AG04450 (cell line): ENCODE measurements at regions of chr4 and their contacts with region 1.

Region 1: GRCh38 chr4:177047070-177047850 is 254.5 kb upstream of the VEGFC start:
- DNase-seq: peak; percentile 59
- H3K4me3 ChIP-seq: no peak overlapping the region
- H3K27ac ChIP-seq: no peak overlapping the region
- H3K27me3 ChIP-seq: no peaks in the 10 kb centered on the region
- CTCF ChIP-seq: peak; percentile 88

Region 2: GRCh38 chr4:176563591-176563990 is 483.7 kb before region 1 on chr4:
- CTCF ChIA-PET with region 1: interaction called, 12 read pairs
- POLR2A ChIA-PET with region 1: no interaction called
- DNase-seq: no peak
- H3K4me3 ChIP-seq: no peak overlapping the region
- H3K27ac ChIP-seq: no peak overlapping the region
- H3K27me3 ChIP-seq: no peaks in the 10 kb centered on the region
- CTCF ChIP-seq: peak; percentile 43

Region 3: DNA sequence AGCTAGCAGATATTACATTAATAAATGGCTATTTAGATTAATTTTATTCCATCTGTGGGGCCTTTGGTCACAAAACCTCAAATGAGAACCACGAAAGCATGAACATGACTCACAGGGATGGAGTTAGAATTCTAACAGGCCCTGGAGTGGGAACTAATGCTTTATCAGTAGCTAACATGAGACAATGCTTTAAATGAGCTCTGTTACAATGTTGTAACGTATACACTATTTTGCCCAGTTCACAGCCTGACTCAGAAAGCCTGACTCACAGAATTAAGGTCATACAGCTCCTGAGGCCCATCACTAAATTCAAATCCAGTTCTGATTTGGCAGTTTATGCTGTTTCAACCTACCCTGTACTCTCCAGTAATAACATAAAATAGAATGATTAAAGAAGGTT is 277.7 kb before region 1 on chr4:
- CTCF ChIA-PET with region 1: interaction called, 18 read pairs
- POLR2A ChIA-PET with region 1: interaction called, 3 read pairs
- DNase-seq: peak; percentile 80
- H3K4me3 ChIP-seq: no peak overlapping the region
- H3K27ac ChIP-seq: peak overlapping the region; percentile 89
- H3K27me3 ChIP-seq: no peaks in the 10 kb centered on the region
- CTCF ChIP-seq: no peak

Region 4: GRCh38 chr4:176894498-176894897 is 152.8 kb before region 1 on chr4:
- CTCF ChIA-PET with region 1: interaction called, 10 read pairs
- POLR2A ChIA-PET with region 1: no interaction called
- DNase-seq: no peak
- H3K4me3 ChIP-seq: no peak overlapping the region
- H3K27ac ChIP-seq: no peak overlapping the region
- H3K27me3 ChIP-seq: no peaks in the 10 kb centered on the region
- CTCF ChIP-seq: no peak

Region 5: DNA sequence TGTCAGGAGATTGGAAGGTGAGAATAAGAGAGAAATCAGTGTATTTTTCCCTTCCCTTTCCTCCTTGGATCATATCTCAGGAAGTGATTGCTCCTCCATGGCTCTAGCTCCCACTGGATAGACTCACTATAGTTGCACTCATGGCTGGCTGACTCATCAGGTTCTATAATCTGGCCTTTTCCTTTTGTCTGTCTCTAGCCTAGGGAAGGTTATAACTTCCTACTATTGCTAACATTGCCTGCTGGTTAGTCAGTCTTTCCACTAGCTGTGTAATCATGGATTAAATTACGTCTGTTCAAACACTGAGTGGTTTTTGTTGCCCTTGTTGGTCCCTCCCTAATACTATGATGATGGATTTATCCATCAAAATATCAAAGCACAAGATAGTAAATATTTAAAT is 59.0 kb before region 1 on chr4:
- CTCF ChIA-PET with region 1: interaction called, 18 read pairs
- POLR2A ChIA-PET with region 1: no interaction called
- DNase-seq: peak; percentile 82
- H3K4me3 ChIP-seq: no peak overlapping the region
- H3K27ac ChIP-seq: peak overlapping the region; percentile 55
- H3K27me3 ChIP-seq: no peaks in the 10 kb centered on the region
- CTCF ChIP-seq: no peak

Region 6: GRCh38 chr4:177064729-177065394 is 17.6 kb after region 1 on chr4:
- CTCF ChIA-PET with region 1: interaction called, 66 read pairs
- POLR2A ChIA-PET with region 1: no interaction called
- DNase-seq: no peak
- H3K4me3 ChIP-seq: no peak overlapping the region
- H3K27ac ChIP-seq: no peak overlapping the region
- H3K27me3 ChIP-seq: no peaks in the 10 kb centered on the region
- CTCF ChIP-seq: no peak